Mammary epithelial cell (primary cell): ENCODE measurements at regions of chr22 and their contacts with region 1.

Region 1: GRCh38 chr22:41274856-41275255 is 11.1 kb downstream of the RANGAP1 start:
- DNase-seq: no peak
- H3K4me3 ChIP-seq: no peak overlapping the region
- H3K27ac ChIP-seq: no peak overlapping the region
- H3K4me1 ChIP-seq: peaks cover 8% of the 10 kb centered on the region
- H3K27me3 ChIP-seq: no peaks in the 10 kb centered on the region
- CTCF ChIP-seq: no peak

Region 2: DNA sequence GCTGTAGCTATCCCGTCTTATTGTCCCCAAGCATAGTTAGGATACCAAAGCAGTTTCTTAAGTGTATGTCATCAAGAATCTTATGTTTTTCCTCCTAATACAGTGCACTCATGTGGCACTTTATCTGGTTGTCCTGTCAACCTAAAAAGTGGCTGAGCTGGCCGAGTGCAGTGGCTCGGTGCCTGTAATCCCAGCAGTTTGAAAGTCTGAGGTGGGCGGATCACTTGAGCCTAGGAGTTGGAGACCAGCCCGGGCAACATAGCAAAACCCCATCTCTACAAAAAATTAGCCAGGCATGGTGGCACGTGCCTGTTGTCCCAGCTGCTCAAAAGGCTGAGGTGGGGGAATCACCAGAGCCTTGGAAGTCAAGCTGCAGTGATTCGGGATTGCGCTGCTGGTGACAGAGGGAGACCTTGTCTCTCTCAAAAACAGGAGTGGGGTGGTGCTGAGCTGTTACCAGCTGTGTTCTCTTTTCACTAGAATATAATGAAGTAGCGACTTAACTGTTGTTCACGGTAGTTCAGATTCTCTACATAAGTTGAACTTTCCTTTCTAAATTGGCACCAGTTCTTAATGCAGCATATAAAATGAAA is 134.4 kb before region 1 on chr22:
- CTCF ChIA-PET with region 1: no interaction called
- dilution Hi-C with region 1: no loop called
- in situ Hi-C with region 1: no loop called
- intact Hi-C with region 1: no loop called
- DNase-seq: no peak
- H3K4me3 ChIP-seq: no peak overlapping the region
- H3K27ac ChIP-seq: no peak overlapping the region
- H3K4me1 ChIP-seq: no peaks in the 10 kb centered on the region
- H3K27me3 ChIP-seq: no peaks in the 10 kb centered on the region
- CTCF ChIP-seq: no peak

Region 3: DNA sequence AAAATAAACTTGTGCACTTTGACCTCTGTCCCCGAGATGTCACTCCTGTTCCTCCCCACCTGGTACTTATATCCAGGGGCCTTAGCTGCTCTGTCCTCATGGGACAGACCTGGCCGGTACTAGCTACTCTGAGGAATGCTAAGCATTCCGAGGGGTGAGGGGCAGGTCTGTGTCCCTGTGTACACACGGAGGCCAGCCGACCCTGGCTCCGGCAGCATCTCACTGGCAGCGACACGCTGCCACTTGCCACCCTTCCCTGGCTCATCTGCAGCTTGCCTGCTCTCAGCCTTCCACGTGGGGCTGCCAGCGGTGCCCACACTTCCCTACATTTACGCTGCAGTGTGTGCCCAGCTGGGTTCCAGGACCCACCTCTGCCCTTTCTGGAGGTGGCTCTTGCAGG is 85.3 kb after region 1 on chr22:
- CTCF ChIA-PET with region 1: no interaction called
- dilution Hi-C with region 1: loop called (anchors 5 kb)
- in situ Hi-C with region 1: no loop called
- intact Hi-C with region 1: no loop called
- DNase-seq: no peak
- H3K4me3 ChIP-seq: no peak overlapping the region
- H3K27ac ChIP-seq: no peak overlapping the region
- H3K4me1 ChIP-seq: peaks cover 4% of the 10 kb centered on the region
- H3K27me3 ChIP-seq: no peaks in the 10 kb centered on the region
- CTCF ChIP-seq: no peak